Activated T-helper 1 cell treated with anti-CD3 and anti-CD28 coated beads, Interleukin-12 subunit alpha, Interleukin-12 subunit beta, Interleukin-2, Interleukin-4 antibody, amounts not matched to agents 30 ng/mL and 10 ng/mL and 1 ng/mL, durations not matched to agents 14 hours and 24 hours and 36 hours (primary cell): ENCODE measurements at regions of chr12 and their contacts with region 1.

Region 1: GRCh38 chr12:8078398-8078797 is 3.7 kb upstream of the NECAP1 start:
- DNase-seq: peak; percentile 28
- H3K4me3 Mint-ChIP-seq: no peak overlapping the region
- H3K27ac Mint-ChIP-seq: no peak overlapping the region
- H3K4me1 Mint-ChIP-seq: peaks cover 30% of the 10 kb centered on the region
- H3K27me3 Mint-ChIP-seq: no peaks in the 10 kb centered on the region

Region 2: GRCh38 chr12:6443361-6443983 is 1634.9 kb before region 1 on chr12:
- intact Hi-C with region 1: loop called (anchors 5 kb)
- DNase-seq: no peak
- H3K4me3 Mint-ChIP-seq: peak overlapping the region; percentile 93
- H3K27ac Mint-ChIP-seq: peak overlapping the region; percentile 97
- H3K4me1 Mint-ChIP-seq: peaks cover 82% of the 10 kb centered on the region
- H3K27me3 Mint-ChIP-seq: no peaks in the 10 kb centered on the region

Region 3: DNA sequence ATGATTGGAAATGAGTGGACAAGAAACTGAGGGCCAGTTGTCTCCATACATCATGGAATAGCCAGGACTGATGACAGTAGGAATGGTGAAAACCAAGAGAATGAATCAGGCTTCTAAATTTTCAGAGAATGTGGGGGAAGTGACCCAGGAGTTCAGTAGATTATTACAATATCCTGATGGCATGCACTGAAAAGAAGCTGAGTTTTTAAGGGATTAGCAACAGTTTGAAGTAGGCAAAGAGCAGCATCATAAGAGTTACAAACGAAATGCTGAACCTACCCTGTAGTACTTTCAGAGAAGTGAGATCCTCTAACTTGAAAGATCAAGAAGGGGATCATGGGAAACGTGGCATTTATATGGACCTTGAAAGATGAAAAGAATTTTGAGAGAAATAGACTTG is 218.8 kb before region 1 on chr12:
- intact Hi-C with region 1: loop called (anchors 1 kb)
- DNase-seq: no peak
- H3K4me3 Mint-ChIP-seq: no peak overlapping the region
- H3K27ac Mint-ChIP-seq: no peak overlapping the region
- H3K4me1 Mint-ChIP-seq: peaks cover 21% of the 10 kb centered on the region
- H3K27me3 Mint-ChIP-seq: peaks cover 9% of the 10 kb centered on the region

Region 4: DNA sequence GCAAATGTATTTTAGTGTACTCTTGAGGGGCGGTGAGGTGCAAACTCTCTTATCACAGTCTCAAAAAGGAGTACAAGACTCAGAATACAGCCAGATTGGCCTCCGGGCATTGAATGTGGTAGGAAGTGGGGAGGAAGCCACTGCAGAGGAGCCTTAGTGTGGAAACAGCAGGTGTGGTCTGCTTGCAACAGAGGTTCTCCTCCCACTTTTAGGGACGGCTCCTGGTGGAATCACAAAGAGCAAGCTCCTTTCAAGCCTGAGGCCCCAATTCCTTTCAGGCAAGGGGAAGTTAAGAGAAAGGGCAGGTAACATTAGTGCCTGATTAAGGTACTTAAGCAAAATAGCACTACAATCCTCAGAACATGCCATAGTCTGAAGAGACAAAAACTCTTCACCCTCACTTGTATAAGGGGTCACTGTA is 118.7 kb before region 1 on chr12:
- intact Hi-C with region 1: loop called (anchors 1 kb)
- DNase-seq: peak; percentile 56
- H3K4me3 Mint-ChIP-seq: peak overlapping the region; percentile 92
- H3K27ac Mint-ChIP-seq: peak overlapping the region; percentile 97
- H3K4me1 Mint-ChIP-seq: peaks cover 52% of the 10 kb centered on the region
- H3K27me3 Mint-ChIP-seq: no peaks in the 10 kb centered on the region

Region 5: DNA sequence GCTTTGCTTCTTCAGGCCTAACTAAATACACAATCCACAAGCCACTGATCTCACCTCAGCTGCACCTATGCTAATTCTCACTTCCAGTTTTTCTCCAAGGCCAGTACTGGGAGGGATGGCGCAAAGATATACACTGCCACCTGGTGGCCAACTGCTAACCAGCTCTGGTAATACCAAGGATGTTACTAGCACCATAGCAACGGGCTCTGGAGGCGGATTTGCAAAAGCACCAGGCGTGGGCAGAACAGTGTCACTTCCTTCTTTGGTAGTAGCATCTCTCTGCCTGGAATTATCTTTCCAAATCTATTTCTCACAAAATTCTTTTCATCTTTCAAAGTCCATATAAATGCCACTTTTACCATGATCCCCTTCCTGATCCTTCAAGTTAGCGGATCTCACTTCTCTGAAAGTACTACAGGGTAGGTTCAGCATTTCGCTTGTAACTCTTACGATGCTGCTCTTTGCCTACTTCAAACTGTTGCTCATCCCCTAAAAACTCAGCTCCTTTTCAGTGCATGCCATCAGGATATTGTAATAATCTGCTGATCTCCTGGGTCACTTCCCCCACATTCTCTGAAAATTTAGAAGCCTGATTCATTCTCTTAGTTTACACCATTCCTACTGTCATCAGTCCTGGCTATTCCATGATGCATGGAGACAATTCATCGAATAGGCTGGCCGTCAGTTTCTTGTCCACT is 83.0 kb before region 1 on chr12:
- intact Hi-C with region 1: no loop called
- DNase-seq: peak; percentile 74
- H3K4me3 Mint-ChIP-seq: no peak overlapping the region
- H3K27ac Mint-ChIP-seq: no peak overlapping the region
- H3K4me1 Mint-ChIP-seq: peaks cover 21% of the 10 kb centered on the region
- H3K27me3 Mint-ChIP-seq: no peaks in the 10 kb centered on the region

Region 6: GRCh38 chr12:8026291-8026900 is 52.0 kb before region 1 on chr12:
- intact Hi-C with region 1: loop called (anchors 1 kb)
- DNase-seq: peak; percentile 96
- H3K4me3 Mint-ChIP-seq: peak overlapping the region; percentile 93
- H3K27ac Mint-ChIP-seq: peak overlapping the region; percentile 99
- H3K4me1 Mint-ChIP-seq: peaks cover 19% of the 10 kb centered on the region
- H3K27me3 Mint-ChIP-seq: no peaks in the 10 kb centered on the region

Region 7: DNA sequence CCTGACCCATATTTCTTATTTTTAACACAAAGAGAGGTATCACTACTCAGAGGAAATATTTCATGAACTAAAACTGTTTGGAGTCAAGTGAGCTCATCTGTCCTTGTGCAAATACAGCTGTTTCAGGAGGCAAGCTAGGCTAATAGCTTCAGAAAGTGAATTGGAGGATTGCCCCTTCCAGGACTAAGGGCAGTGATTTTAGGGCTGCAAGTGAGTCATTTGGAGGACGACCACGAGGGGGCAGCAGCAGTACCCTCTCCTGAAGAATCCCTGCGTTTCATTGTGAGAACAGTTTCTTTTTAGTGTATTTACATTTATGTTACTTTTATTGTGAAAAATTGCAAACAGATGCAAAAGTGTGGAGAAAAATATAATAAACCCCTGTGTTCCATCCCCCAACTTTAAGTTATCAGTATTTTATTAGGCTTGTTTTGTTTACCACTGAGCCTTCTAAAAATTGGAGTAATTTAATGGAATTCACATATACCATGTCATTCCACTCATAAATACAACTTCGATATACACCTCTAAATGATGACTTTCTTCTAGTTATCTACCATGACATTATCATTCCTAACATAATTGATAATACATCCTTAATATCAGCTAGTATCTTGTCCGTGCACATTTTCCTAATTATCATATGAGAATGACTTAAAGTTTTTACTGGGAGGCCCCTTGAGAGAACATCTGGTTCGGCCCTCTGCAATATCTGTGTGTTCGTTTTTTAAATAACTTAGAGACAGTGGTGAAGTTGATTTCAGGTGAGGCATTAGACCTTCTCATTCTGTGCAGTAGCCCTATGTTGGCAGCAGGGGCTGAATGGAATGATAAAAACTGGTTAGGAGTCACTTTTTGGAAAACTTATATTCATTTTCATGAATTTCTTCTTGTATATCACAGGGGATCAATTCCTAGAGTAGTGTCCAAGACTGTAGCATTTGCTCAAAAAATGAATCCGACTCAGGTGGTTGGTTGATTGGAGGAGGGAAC is 32.1 kb before region 1 on chr12:
- intact Hi-C with region 1: loop called (anchors 1 kb)
- DNase-seq: peak; percentile 65
- H3K4me3 Mint-ChIP-seq: no peak overlapping the region
- H3K27ac Mint-ChIP-seq: no peak overlapping the region
- H3K4me1 Mint-ChIP-seq: peaks cover 18% of the 10 kb centered on the region
- H3K27me3 Mint-ChIP-seq: no peaks in the 10 kb centered on the region

Region 8: GRCh38 chr12:8493084-8493483 is 414.7 kb after region 1 on chr12:
- intact Hi-C with region 1: loop called (anchors 1 kb)
- DNase-seq: peak; percentile 42
- H3K4me3 Mint-ChIP-seq: no peak overlapping the region
- H3K27ac Mint-ChIP-seq: peak overlapping the region; percentile 24
- H3K4me1 Mint-ChIP-seq: peaks cover 23% of the 10 kb centered on the region
- H3K27me3 Mint-ChIP-seq: peaks cover 18% of the 10 kb centered on the region